Keratinocyte (primary cell): ENCODE measurements at regions of chr2 and their contacts with region 1.

Region 1: GRCh38 chr2:55168221-55169154 is 63.6 kb downstream of the CLHC1 start:
- DNase-seq: no peak
- H3K4me3 ChIP-seq: no peak overlapping the region
- H3K27ac ChIP-seq: no peak overlapping the region
- H3K4me1 ChIP-seq: peaks cover 3% of the 10 kb centered on the region
- H3K27me3 ChIP-seq: no peaks in the 10 kb centered on the region
- CTCF ChIP-seq: peak; percentile 53 to 77 (median 65)

Region 2: DNA sequence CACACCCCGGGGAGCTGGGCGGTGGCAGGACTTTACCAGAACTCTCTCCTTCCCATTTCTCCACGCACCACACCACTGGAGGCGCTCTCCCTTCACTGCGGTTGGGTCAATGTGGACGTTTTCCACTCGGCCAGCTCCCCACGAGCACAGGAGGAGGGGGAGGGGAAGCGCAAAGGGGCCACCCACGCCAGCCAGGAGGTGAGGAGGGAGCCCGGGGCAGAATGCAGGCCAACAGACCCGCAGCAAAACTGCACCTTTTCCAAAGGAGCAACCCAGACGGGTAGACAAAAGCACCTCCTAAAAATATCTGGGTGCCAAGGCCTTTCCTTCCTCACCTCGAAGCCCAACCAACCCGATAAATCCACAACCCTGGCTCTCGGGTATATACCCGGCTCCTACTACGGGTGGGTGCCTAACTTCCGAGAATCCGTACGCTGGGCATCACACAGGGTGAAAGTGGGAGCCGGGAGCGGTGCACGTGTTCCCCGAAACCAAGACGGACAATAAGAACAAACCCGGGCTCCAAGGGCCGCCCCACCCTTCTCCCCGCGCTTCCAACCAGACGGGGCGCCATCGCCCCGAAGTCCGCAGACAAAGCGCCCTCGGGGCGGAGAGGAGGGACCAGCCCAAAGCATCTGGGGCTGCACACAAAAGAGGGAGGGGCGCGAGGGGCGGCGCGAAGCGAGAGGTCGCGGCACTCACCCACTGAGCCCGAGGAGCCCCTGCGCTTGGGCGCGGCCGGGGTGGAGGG is 119.3 kb before region 1 on chr2:
- dilution Hi-C with region 1: loop called (anchors 25 kb)
- DNase-seq: no peak
- H3K4me3 ChIP-seq: peak overlapping the region; percentile 76 to 99 (median 89)
- H3K27ac ChIP-seq: peak overlapping the region; percentile 98
- H3K4me1 ChIP-seq: peaks cover 33% of the 10 kb centered on the region
- H3K27me3 ChIP-seq: no peaks in the 10 kb centered on the region
- CTCF ChIP-seq: peak; percentile 72 to 86 (median 76)